Cardiac septum (tissue), 1 donor: ENCODE measurements at regions of chr16 and their contacts with region 1.

Region 1: GRCh38 chr16:6643080-6643686 is 689.5 kb upstream of the RBFOX1 start:
- DNase-seq: no peak

Region 2: GRCh38 chr16:5234295-5235050 is 1408.7 kb before region 1 on chr16:
- intact Hi-C with region 1: loop called (anchors 10 kb)
- DNase-seq: no peak

Region 3: GRCh38 chr16:5502467-5502869 is 1140.7 kb before region 1 on chr16:
- intact Hi-C with region 1: loop called (anchors 5 kb)
- DNase-seq: no peak

Region 4: GRCh38 chr16:6753553-6753952 is 110.4 kb after region 1 on chr16:
- intact Hi-C with region 1: no loop called
- DNase-seq: no peak